Breast epithelium (tissue), 4 donors: ENCODE measurements at regions of chr13 and their contacts with region 1.

Region 1: DNA sequence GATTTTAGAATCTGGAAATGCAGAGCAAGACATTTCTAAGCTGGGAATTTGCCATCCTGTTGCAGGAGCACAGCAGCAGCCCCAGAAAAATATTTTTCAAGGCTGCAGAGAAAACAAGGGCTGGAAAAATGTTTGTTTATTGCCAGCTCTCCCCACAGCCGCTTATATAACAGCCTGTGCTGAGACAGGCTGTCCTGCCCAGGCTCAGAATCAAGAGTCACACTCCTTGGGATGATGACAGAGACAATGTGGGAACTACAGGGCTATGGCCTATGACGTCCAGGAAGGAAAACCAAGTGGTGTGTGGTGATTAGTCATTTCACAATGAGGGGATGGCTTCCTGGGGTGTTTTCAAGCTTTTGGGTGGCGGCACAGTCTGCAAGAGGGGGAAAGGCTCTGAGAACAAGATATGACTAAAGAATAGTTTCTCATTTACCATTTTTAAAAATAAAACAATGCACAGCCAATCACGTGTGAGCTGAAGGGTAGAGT is 136.3 kb upstream of the SERP2 start:
- DNase-seq: peak in 1 of 2 donors; percentile 56
- H3K4me3 ChIP-seq: peak overlapping the region in 1 of 3 donors; percentile 3
- H3K27ac ChIP-seq: peak overlapping the region; percentile 73 to 93
- H3K4me1 ChIP-seq: no peaks in the 10 kb centered on the region
- H3K27me3 ChIP-seq: no peaks in the 10 kb centered on the region
- CTCF ChIP-seq: no peak
- POLR2A ChIP-seq: no peak

Region 2: DNA sequence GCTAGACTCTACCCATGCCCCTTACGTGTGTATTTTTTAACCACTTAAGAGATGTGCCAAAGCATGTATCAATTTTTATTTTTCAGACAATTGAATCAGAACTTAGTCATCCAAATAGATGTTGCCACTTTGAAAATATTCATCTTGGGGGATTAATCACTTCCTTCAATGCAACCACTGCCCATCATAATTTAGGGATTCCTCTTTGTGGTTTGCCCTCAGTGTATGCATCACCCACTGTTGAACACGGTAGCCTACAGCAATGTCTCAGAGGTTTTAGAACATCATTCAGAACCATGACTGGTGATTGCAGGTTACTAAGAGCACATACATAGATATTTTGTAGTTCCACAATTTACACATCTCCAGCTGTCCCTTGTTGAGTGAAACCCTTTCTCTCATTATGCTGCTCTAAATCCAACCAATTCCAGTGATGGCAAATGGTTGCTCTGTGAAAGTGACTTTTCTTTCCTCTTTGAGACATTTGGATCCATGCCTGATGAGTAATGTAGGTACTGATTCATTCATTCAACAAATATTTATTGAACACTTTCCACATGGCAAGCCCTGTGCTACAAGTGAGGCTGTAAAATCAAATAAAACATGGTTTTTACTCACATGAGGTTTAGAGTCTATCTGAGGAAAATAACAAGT is 75.7 kb after region 1 on chr13:
- intact Hi-C with region 1: loop called (anchors 2 kb)
- DNase-seq: no peak
- H3K4me3 ChIP-seq: no peak overlapping the region
- H3K27ac ChIP-seq: peak overlapping the region; percentile 36 to 56
- H3K4me1 ChIP-seq: no peaks in the 10 kb centered on the region
- H3K27me3 ChIP-seq: no peaks in the 10 kb centered on the region
- CTCF ChIP-seq: no peak
- POLR2A ChIP-seq: no peak